PC-9 (cell line): ENCODE measurements at regions of chr1 and their contacts with region 1.

Region 1: DNA sequence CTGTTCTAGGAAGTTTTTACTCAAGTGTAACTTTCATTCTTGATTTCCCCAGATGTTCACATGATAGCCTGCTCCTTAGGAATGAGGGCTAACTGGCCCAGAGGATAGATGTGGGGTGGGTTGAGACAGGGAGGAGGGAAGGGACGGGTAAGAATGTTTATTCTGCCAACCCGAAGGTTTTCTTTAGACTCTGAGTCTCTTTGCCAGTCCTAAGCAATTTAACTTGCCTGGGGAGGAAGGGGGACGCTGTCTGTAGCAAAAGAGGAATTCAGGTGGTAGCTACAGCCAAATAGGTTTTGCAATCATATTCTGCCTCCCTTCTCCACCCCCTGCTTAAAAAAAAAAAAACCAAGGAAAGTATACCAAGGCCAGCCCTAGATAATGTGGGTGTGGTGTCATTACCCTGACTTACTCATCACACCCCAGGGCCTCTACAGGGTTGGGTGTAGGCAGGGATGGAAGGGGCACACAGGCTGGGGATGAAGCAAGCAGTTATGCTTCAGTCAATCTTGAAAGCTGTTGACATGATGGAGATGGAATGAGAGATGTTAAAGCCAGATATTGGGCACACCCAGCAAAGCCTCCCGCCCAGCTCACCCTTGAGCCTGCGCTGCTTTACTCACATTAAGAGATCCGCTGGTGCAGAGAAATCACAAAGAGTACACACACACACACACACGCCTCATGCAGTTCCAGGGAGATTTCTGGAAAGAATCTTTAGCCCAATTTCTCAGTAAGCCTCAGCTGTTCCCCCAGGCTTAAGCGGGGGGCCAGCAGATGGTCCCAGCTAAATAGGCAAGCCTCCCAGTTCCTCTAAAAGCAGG is 59.9 kb downstream of the PLXNA2 start:
- DNase-seq: peak; percentile 91 to 99
- H3K4me3 ChIP-seq: peak overlapping the region; percentile 4; the same call in 1 of the 2 replicates
- H3K27ac ChIP-seq: peak overlapping the region; percentile 72
- H3K4me1 ChIP-seq: peaks cover 85% of the 10 kb centered on the region
- H3K27me3 ChIP-seq: no peaks in the 10 kb centered on the region
- CTCF ChIP-seq: no peak

Region 2: GRCh38 chr1:207828485-207829158 is 355.7 kb before region 1 on chr1:
- CTCF ChIA-PET with region 1: no interaction called
- POLR2A ChIA-PET with region 1: no interaction called
- intact Hi-C with region 1: loop called (anchors 10 kb)
- DNase-seq: peak; percentile 56 to 66
- H3K4me3 ChIP-seq: no peak overlapping the region
- H3K27ac ChIP-seq: no peak overlapping the region
- H3K4me1 ChIP-seq: peaks cover 35% of the 10 kb centered on the region
- H3K27me3 ChIP-seq: no peaks in the 10 kb centered on the region
- CTCF ChIP-seq: peak; percentile 79

Region 3: DNA sequence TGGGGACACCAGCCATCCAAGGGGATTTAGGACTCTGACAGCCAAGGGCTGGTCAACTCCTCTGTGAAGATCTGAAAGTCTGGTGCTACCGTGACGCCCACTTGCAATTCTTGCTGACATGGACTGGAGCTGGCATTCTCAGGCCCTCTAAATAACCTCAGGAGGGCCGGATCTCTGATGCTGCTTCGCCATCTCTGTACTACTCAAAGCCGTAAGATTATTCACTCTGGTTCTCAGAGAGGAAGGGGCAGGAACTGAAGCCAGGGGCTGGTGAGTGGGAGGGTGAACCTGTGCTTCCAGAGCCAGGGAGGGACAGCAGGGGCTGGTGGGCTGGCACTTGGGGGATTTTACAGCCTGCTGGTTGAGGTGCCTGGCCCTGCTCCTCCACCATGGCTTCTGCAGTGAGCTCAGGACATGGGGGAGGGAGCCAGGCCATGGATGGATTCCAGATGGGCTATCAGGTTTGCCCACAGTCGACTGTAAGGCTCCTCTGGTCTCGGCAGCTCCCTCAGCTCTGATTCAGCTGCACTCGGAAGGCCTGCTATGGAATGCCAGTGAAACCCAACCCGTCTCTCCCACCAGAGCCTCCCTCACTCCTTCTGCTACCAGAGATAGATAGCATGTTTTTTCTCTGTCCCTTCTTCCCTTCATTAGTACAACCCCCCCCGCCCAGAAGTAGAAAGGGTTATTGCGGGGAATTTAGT is 24.6 kb before region 1 on chr1:
- CTCF ChIA-PET with region 1: no interaction called
- POLR2A ChIA-PET with region 1: no interaction called
- intact Hi-C with region 1: loop called (anchors 1 kb)
- DNase-seq: no peak
- H3K4me3 ChIP-seq: no peak overlapping the region
- H3K27ac ChIP-seq: no peak overlapping the region
- H3K4me1 ChIP-seq: peaks cover 16% of the 10 kb centered on the region
- H3K27me3 ChIP-seq: no peaks in the 10 kb centered on the region
- CTCF ChIP-seq: no peak

Region 4: GRCh38 chr1:208201229-208201628 is 16.9 kb after region 1 on chr1:
- CTCF ChIA-PET with region 1: interaction called, 3 read pairs
- POLR2A ChIA-PET with region 1: interaction called, 5 read pairs
- intact Hi-C with region 1: loop called (anchors 1 kb)
- DNase-seq: peak; percentile 71 to 91
- H3K4me3 ChIP-seq: no peak overlapping the region
- H3K27ac ChIP-seq: peak overlapping the region; percentile 37; the same call in 1 of the 2 replicates
- H3K4me1 ChIP-seq: peaks cover 58% of the 10 kb centered on the region
- H3K27me3 ChIP-seq: no peaks in the 10 kb centered on the region
- CTCF ChIP-seq: no peak

Region 5: DNA sequence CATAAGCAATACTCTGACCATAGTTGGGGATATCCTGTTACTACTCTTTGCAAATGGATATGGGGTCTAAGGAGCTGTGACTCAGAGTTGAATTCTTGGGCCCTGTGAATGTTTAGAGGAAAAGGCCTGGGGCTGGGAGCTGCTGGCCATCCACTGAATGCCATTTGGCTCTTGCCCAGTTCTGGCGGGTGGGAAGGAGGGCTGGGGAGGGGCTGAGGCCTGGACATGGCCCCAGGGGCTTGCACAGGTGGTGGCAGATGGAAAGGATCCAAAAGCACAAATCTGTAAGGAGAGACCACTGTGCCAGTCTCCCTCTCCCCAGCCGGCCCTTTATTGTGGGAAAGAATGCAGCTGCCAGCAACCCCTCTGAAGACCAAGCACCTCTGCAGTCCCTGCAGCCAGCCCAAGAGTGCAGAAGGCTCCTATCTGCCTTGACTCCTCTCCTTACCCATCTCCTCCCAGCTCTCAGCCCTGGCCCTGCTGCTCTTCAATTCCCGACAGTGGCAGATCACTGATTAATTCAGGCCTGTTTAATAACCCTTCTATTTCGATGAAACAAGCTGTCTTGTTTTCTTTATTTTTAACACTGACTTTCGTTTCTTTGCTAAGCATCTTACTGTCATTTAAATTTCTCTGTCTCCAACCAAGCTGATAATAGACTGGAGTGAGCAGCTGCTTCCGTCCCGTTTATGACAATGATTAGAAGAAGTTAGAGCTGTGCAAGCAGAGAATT is 47.8 kb after region 1 on chr1:
- CTCF ChIA-PET with region 1: no interaction called
- POLR2A ChIA-PET with region 1: interaction called, 13 read pairs
- intact Hi-C with region 1: loop called (anchors 1 kb)
- DNase-seq: peak; percentile 88 to 89
- H3K4me3 ChIP-seq: no peak overlapping the region
- H3K27ac ChIP-seq: peak overlapping the region; percentile 27
- H3K4me1 ChIP-seq: peaks cover 64% of the 10 kb centered on the region
- H3K27me3 ChIP-seq: no peaks in the 10 kb centered on the region
- CTCF ChIP-seq: no peak

Region 6: GRCh38 chr1:208245185-208245705 is 60.9 kb after region 1 on chr1:
- CTCF ChIA-PET with region 1: interaction called, 5 read pairs
- POLR2A ChIA-PET with region 1: no interaction called
- intact Hi-C with region 1: loop called (anchors 1 kb)
- DNase-seq: peak; percentile 74 to 76
- H3K4me3 ChIP-seq: peak overlapping the region; percentile 94
- H3K27ac ChIP-seq: no peak overlapping the region
- H3K4me1 ChIP-seq: peaks cover 28% of the 10 kb centered on the region
- H3K27me3 ChIP-seq: peaks cover 4% of the 10 kb centered on the region; the same call in 1 of the 2 replicates
- CTCF ChIP-seq: peak; percentile 86

Region 7: GRCh38 chr1:208393826-208394225 is 209.5 kb after region 1 on chr1:
- CTCF ChIA-PET with region 1: no interaction called
- POLR2A ChIA-PET with region 1: no interaction called
- intact Hi-C with region 1: no loop called
- DNase-seq: no peak
- H3K4me3 ChIP-seq: no peak overlapping the region
- H3K27ac ChIP-seq: no peak overlapping the region
- H3K4me1 ChIP-seq: no peaks in the 10 kb centered on the region
- H3K27me3 ChIP-seq: peaks cover 40% of the 10 kb centered on the region
- CTCF ChIP-seq: no peak